Activated naive CD4-positive, alpha-beta T cell treated with anti-CD3 and anti-CD28 coated beads for 36 hours (primary cell): ENCODE measurements at regions of chr11 and their contacts with region 1.

Region 1: GRCh38 chr11:62601394-62602140 is at the start of gene MTA2:
- DNase-seq: peak; percentile 99
- H3K4me3 Mint-ChIP-seq: peak within 1 kb of the TSS; percentile 91
- H3K27ac Mint-ChIP-seq: peak within 1 kb of the TSS; percentile 99
- H3K4me1 Mint-ChIP-seq: peaks cover 45% of the 10 kb centered on the region
- H3K27me3 Mint-ChIP-seq: no peaks in the 10 kb centered on the region
- total RNA-seq, gene MTA2: 191 to 197 TPM

Region 2: DNA sequence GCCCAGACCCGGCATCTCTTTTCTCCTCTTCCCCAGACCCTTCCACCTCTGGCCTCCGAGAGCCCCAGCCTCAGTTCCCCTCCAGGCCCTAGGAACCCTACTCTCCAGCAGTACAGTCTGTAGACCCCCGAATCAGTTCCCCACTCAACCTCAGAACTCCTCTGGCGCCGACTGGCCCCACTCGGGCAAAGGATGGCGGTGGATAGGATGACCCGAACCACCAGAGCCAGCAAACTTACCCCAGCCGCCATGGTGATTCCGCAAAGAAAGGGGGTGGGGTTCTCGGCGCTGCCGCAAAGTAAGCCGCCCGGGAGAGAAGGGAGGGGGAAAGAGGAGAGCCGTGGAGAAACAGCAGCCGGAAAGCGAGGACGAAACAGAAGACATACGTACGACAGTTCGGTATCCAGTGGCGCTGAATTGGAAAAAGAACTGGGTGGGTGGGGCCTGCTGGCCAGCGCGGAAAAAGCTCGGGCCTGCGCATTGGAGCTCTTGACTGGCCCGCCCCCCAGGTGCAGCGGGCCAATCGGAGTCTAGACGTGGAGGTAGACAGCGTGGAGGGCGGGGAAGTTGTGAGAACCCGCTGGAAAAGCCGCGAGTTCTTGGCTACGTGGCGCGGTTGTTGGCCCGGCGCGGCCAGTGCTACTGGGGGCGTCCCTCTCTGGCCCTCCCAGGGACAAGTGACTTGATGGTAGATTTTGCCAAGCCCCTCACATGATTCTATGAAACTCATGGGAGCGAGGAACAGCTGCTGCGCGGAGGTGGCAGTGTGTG is 27.8 kb before region 1 on chr11 and contains the start of gene EEF1G:
- CTCF ChIA-PET with region 1: no interaction called
- intact Hi-C with region 1: loop called (anchors 1 kb)
- DNase-seq: peak; percentile 99
- H3K4me3 Mint-ChIP-seq: peak within 1 kb of the TSS; percentile 95
- H3K27ac Mint-ChIP-seq: peak within 1 kb of the TSS; percentile 97
- H3K4me1 Mint-ChIP-seq: peaks cover 44% of the 10 kb centered on the region
- H3K27me3 Mint-ChIP-seq: no peaks in the 10 kb centered on the region
- total RNA-seq, gene EEF1G: 2,282 to 2,440 TPM

Region 3: DNA sequence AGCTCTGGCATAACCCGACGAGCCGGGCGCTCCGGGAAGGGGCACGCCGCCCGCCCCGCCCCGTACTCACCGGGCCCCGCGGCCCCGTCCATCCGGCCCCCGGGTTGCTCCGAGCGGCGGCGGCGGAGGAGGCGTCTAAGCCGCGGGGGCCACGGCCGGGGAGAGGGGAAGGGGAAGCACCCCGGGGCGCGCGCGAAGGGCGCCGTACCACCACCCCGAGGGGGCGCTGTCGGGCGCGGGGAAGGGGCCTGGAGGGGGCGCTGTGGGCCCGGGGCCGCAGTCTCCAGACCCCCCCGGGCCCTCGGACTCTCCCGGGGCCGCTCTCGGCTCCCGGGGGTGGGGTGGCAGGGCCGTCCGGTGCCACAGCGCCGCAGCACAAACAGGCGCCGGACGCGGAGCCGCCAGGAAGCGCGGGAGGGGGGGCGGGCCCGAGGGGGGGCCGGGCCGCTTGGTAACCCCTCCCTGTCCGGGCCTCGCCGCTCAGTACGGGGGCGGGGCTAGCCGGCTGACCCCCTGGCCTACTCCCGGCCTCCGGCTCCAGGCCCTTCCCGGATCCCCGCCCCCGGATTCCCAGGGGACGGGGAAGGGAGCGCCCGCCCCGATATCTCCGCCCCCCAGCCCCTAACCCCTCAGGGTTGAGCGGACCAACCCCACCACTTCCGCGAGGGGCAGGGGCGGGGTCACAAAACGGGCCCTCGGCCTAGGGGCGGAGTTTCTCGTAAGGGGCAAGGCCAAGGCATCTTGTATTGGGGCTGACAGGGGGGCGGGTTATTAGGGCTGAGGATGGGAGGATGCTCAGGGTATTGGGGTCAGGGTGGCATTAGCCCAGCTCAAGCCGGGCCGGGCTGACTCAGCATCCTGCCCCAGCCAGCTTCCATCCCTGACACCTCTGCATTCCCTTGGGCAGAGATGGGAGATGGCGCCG is 11.1 kb after region 1 on chr11 and contains the starts of genes EML3 and ROM1:
- CTCF ChIA-PET with region 1: interaction called, 15 read pairs
- intact Hi-C with region 1: loop called (anchors 1 kb)
- DNase-seq: peak; percentile 84
- H3K4me3 Mint-ChIP-seq: peak within 1 kb of the TSS; percentile 99
- H3K27ac Mint-ChIP-seq: peak within 1 kb of the TSS; percentile 98
- H3K4me1 Mint-ChIP-seq: peaks cover 54% of the 10 kb centered on the region
- H3K27me3 Mint-ChIP-seq: no peaks in the 10 kb centered on the region
- total RNA-seq, gene EML3: 81.8 to 97.1 TPM
- total RNA-seq, gene ROM1: 0.52 to 1.0 TPM

Region 4: DNA sequence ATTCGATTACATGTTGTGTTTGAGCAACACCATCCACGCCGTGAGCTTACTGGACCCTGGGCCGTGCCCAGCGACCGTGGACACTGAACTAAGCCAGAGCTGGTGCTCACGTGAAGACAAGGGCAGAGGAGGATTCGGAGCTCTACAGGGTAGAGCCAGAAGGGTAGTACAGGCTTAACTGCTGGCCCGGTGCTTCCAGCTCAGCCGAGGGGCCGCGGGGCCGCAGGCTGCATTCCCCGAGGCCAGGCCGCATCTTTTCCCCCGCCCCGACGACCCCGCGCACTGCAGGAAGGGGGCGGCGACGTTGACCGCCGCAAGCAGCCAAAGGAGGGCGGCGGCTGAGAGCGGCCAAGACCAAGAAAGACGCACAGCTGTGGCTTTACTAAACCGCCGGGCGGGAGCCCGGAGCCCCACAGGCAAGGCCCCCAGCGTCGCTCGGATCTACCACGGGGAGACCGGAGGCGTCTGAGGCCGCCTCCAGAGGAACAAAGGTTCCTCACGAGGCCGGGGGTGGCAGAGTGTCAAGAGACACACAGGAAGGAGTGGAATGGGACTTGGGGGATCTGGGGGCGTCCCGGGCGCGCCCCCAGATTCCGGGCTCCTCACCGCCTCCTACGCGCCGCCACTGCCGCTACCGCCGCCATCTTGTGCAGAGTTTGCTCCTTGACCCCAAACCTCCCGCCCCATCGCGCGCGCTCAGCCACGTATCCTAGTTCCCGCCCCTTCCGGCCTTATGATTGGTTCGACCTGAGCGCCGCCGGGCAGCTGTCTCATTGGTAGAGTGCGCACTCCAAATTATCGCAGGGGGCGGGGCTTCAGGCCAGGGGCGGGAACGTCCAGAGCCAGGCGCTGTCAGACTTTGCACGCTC is 44.6 kb after region 1 on chr11 and contains the start of gene GANAB:
- CTCF ChIA-PET with region 1: no interaction called
- intact Hi-C with region 1: loop called (anchors 1 kb)
- DNase-seq: peak; percentile 100
- H3K4me3 Mint-ChIP-seq: peak within 1 kb of the TSS; percentile 99
- H3K27ac Mint-ChIP-seq: peak within 1 kb of the TSS; percentile 95
- H3K4me1 Mint-ChIP-seq: peaks cover 35% of the 10 kb centered on the region
- H3K27me3 Mint-ChIP-seq: no peaks in the 10 kb centered on the region
- total RNA-seq, gene GANAB: 221 to 230 TPM

Region 5: DNA sequence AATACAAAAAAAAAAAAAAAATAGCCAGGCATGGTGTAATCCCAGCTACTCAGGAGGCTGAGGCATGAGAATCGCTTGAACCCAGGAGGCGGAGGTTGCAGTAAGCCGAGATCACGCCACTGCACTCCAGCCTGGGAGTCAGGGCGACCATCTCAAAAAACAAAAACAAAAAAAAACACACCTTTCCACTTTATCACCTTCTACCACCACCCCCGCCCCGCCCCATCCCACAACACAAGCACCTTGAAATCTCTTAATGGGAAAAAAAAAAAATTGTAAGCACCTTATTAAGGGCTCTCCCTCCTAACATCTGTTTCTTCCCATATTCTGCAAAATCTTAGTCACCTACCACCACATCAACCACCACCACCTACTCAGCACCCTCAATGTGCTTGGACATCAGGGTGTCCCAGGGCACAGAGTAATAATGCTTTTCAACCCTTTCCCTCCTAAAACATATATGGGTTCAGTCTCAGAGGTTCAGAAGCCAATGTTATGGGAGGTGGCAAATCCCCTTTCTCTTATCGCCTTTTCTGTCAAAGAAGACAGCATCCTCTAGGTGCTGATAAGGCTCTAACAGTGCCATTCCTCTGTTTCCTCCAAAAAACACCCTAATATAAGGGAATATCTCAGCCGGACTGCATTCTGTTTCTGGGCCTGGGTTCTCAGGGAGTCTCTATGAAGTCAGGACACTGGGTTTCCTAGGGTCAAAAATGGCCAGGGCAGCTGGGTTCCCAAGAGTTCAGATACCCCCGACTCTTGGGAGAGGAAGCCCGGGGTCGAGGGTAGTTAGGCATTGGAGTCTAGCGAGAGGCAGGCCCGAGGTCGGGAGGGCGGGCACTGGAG is 50.8 kb after region 1 on chr11:
- CTCF ChIA-PET with region 1: interaction called, 3 read pairs
- intact Hi-C with region 1: loop called (anchors 1 kb)
- DNase-seq: peak; percentile 37
- H3K4me3 Mint-ChIP-seq: peak overlapping the region; percentile 90
- H3K27ac Mint-ChIP-seq: peak overlapping the region; percentile 87
- H3K4me1 Mint-ChIP-seq: peaks cover 25% of the 10 kb centered on the region
- H3K27me3 Mint-ChIP-seq: no peaks in the 10 kb centered on the region

Region 6: DNA sequence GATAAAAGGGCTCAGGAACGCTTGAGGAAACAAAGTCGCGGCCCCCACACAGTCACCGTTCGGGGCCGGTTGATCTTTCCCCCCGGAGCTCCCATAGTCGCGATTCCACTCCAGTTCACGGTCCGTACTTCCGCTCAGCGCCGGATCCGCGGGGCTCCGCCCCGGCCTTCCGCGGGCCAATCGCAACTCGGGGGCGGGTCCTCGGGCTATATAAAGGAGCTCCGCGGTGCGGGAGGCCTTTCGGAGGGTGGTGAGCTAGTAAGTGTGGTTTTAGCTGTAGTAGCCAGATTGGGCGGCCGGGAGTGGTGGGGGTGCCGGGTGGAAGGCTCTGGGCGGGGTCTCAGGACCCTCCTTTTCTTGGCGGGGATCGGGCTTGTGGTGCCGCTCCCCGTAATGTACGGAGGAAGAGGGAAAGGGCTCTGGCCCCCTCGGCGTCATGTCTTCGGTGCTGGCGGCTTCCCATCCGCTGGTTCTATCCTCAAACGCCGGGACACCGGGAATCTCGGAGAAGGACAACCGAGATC is 63.6 kb after region 1 on chr11 and contains the starts of genes C11orf98 and CSKMT:
- CTCF ChIA-PET with region 1: interaction called, 4 read pairs
- intact Hi-C with region 1: loop called (anchors 1 kb)
- DNase-seq: peak; percentile 96
- H3K4me3 Mint-ChIP-seq: peak within 1 kb of the TSS; percentile 98
- H3K27ac Mint-ChIP-seq: peak within 1 kb of the TSS; percentile 88
- H3K4me1 Mint-ChIP-seq: peaks cover 42% of the 10 kb centered on the region
- H3K27me3 Mint-ChIP-seq: no peaks in the 10 kb centered on the region
- total RNA-seq, gene C11orf98: 73.5 to 76.5 TPM
- total RNA-seq, gene CSKMT: 35.2 to 44.0 TPM

Region 7: DNA sequence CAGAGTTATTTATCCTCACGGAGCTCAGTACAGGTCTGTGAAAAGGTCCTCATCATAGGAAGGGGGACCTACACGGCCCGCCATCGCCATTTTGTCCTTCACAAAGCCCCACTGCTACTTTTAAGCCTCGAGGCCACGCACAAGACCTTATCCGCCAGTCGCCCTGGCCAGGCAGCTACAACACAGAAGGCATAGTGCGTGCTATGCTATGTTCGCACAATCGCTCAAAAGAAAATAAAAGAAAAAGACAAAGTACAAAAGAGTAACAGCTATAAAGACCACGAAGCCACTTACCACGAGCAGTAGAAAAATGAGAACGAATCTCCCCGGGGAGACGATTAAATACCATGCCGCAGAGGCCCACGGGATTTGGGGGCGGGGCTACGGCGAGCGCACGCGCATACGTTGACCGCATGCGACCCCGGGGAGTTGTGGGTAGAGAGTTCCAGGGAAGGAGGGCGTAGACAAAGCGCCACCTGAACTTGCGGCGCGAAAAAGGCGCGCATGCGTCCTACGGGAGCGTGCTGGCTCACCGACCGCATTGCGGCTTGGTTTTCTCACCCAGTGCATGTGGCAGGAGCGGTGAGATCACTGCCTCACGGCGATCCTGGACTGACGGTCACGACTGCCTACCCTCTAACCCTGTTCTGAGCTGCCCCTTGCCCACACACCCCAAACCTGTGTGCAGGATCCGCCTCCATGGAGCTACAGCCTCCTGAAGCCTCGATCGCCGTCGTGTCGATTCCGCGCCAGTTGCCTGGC is 254.2 kb after region 1 on chr11:
- CTCF ChIA-PET with region 1: no interaction called
- intact Hi-C with region 1: loop called (anchors 1 kb)
- DNase-seq: peak; percentile 98
- H3K4me3 Mint-ChIP-seq: peak overlapping the region; percentile 99
- H3K27ac Mint-ChIP-seq: peak overlapping the region; percentile 96
- H3K4me1 Mint-ChIP-seq: peaks cover 53% of the 10 kb centered on the region
- H3K27me3 Mint-ChIP-seq: no peaks in the 10 kb centered on the region